Naive thymus-derived CD8-positive, alpha-beta T cell (primary cell): ENCODE measurements at regions of chr20 and their contacts with region 1.

Region 1: DNA sequence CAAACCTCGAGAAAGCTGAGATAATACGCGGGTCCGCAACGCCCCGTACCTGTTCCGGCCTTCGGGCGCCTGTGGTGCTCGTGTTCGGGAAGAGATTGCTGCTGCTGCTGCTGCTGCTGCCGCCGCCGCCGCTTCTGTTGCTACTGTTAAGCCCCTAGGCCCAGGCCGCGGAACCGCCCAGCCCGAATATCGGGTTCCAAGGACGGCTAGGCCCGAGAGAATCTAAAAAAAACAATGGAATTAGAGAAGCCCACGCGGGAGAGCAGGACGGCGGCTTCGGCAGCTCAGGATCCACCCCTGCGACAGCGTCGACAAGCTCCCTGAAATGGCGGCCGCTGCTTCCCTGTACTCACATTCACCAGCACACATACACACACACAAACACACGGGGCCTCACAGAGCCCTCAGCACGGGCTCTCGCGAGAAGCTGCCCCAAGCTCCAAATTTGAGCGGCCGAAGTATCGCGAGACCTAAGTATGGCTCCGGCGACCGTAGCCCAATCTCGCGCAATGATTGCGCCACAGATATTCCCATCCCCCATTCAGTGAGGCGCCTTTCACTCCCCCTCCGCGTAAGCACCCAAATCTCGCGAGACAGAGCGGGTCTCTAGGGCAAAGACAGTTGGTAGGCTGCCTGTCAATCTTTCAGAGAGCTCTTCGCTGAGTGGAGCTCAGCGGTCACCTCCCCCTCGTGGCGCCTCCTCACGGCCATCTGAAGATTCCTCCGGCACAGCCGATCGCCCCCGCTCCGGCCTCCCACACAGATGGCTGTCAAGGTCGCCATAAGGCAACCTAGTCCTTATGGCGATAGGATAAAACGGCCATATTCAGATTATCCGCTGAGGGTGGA is at the start of gene RBM39:
- DNase-seq: peak; percentile 93 to 100 (median 100)
- ATAC-seq: peak; percentile 81 to 85
- H3K4me3 Mint-ChIP-seq: peak within 1 kb of the TSS; percentile 93 to 100 (median 99)
- H3K27ac Mint-ChIP-seq: peak within 1 kb of the TSS; percentile 98 to 100 (median 100)
- H3K4me1 Mint-ChIP-seq: peaks cover 27 to 57% (median 50%) of the 10 kb centered on the region in 4 donors
- H3K27me3 Mint-ChIP-seq: no peaks in the 10 kb centered on the region
- polyA plus RNA-seq, gene RBM39: 110 to 134 (median 112) TPM

Region 2: GRCh38 chr20:35490736-35491181 is 251.4 kb before region 1 on chr20:
- POLR2A ChIA-PET with region 1: interaction called, 16 read pairs
- DNase-seq: peak; percentile 24 to 84 (median 64)
- ATAC-seq: peak; percentile 99 to 100
- H3K4me3 Mint-ChIP-seq: peak overlapping the region; percentile 96 to 100 (median 99)
- H3K27ac Mint-ChIP-seq: peak overlapping the region; percentile 97 to 100 (median 99)
- H3K4me1 Mint-ChIP-seq: peaks cover 31 to 81% (median 75%) of the 10 kb centered on the region in 4 donors
- H3K27me3 Mint-ChIP-seq: no peaks in the 10 kb centered on the region

Region 3: GRCh38 chr20:35664544-35665221 is 77.4 kb before region 1 on chr20 and contains the starts of genes CPNE1 and RBM12:
- POLR2A ChIA-PET with region 1: interaction called, 87 read pairs
- DNase-seq: peak; percentile 87 to 97 (median 94)
- ATAC-seq: peak; percentile 77 to 78
- H3K4me3 Mint-ChIP-seq: peak within 1 kb of the TSS; percentile 89 to 98 (median 96)
- H3K27ac Mint-ChIP-seq: peak within 1 kb of the TSS; percentile 96 to 100 (median 99)
- H3K4me1 Mint-ChIP-seq: peaks cover 10 to 55% (median 47%) of the 10 kb centered on the region in 4 donors
- H3K27me3 Mint-ChIP-seq: no peaks in the 10 kb centered on the region
- polyA plus RNA-seq, gene CPNE1: 329 to 392 (median 384) TPM
- polyA plus RNA-seq, gene RBM12: 35.2 to 43.7 (median 39.9) TPM

Region 4: GRCh38 chr20:35729836-35730582 is 12.1 kb before region 1 on chr20:
- POLR2A ChIA-PET with region 1: interaction called, 13 read pairs
- DNase-seq: no peak
- ATAC-seq: no peak
- H3K4me3 Mint-ChIP-seq: peak overlapping the region in 9 of 10 donors; percentile 16 to 57 (median 31)
- H3K27ac Mint-ChIP-seq: peak overlapping the region in 6 of 10 donors; percentile 2 to 62 (median 34)
- H3K4me1 Mint-ChIP-seq: peaks cover 16 to 71% (median 59%) of the 10 kb centered on the region in 4 donors
- H3K27me3 Mint-ChIP-seq: no peaks in the 10 kb centered on the region

Region 5: DNA sequence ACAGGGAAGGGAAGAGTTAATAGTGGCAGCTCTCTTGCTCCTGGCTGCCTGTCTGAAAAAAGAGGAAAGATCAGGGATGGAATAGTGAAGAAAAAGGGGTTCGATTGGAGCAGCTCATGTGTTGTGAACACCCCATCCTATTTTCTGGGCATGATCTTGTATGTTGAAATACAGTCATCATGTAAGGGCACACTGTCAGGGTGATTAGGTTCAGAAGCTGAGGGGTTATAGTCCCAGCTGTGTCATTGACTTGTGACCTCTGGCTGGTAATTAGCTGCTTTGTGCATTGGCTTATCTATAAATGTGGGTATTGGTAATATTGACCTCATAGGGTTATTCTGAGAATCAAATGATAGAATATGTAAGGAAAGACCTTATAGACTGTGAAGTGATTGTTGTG is 59.7 kb after region 1 on chr20:
- POLR2A ChIA-PET with region 1: interaction called, 23 read pairs
- DNase-seq: no peak
- ATAC-seq: peak in 1 of 2 donors; percentile 26
- H3K4me3 Mint-ChIP-seq: no peak overlapping the region
- H3K27ac Mint-ChIP-seq: peak overlapping the region; percentile 36 to 94 (median 87)
- H3K4me1 Mint-ChIP-seq: peaks cover 8 to 37% (median 22%) of the 10 kb centered on the region in 4 donors
- H3K27me3 Mint-ChIP-seq: no peaks in the 10 kb centered on the region